Activated CD8-positive, alpha-beta memory T cell treated with anti-CD3 and anti-CD28 coated beads, Interleukin-2, amount 10 ng/mL, durations not matched to agents 7 days and 5 days (primary cell): ENCODE measurements at regions of chr16 and their contacts with region 1.

Region 1: GRCh38 chr16:57141822-57142631 is 43.8 kb downstream of the PSME3IP1 start:
- DNase-seq: no peak
- ATAC-seq: peak; percentile 56
- H3K4me3 Mint-ChIP-seq: no peak overlapping the region
- H3K27ac Mint-ChIP-seq: peak overlapping the region; percentile 48
- H3K4me1 Mint-ChIP-seq: peaks cover 20% of the 10 kb centered on the region
- H3K27me3 Mint-ChIP-seq: no peaks in the 10 kb centered on the region

Region 2: DNA sequence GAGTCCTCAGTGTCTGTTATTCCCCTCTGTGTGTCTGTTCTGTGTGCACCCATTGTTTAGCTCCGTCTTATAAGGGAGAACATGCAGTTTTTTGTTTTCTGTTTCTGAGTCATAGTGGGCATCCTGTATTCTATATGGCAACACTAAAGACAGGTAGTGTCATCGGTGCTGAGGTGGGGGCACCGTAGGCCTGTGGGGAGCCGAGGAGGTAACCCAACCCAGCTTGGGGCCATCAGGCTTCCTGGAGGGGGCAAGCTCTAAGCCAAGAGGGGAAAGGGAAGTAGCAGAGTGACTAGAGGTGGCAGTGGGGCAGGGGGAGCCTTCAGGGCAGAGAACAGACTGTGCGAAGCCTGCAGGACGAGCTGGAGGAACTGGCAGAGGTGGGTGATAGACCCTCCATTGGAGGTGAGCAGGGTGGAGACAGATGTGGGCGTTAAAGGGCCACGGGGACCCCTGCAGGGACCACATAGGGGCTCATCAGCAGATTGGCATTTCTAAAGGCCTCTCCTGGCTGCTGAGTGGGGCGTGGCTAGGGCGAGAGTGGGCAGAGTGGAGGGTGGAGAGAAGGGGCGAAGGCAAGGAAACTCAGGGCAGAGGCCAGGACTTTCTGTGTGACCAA is 13.1 kb before region 1 on chr16:
- CTCF ChIA-PET with region 1: interaction called, 10 read pairs
- DNase-seq: peak; percentile 86
- ATAC-seq: peak; percentile 81
- H3K4me3 Mint-ChIP-seq: peak overlapping the region; percentile 74
- H3K27ac Mint-ChIP-seq: peak overlapping the region; percentile 95
- H3K4me1 Mint-ChIP-seq: peaks cover 82% of the 10 kb centered on the region
- H3K27me3 Mint-ChIP-seq: no peaks in the 10 kb centered on the region